ENCODE measurements at regions of chr10 and their contacts with region 1.

Region 1: DNA sequence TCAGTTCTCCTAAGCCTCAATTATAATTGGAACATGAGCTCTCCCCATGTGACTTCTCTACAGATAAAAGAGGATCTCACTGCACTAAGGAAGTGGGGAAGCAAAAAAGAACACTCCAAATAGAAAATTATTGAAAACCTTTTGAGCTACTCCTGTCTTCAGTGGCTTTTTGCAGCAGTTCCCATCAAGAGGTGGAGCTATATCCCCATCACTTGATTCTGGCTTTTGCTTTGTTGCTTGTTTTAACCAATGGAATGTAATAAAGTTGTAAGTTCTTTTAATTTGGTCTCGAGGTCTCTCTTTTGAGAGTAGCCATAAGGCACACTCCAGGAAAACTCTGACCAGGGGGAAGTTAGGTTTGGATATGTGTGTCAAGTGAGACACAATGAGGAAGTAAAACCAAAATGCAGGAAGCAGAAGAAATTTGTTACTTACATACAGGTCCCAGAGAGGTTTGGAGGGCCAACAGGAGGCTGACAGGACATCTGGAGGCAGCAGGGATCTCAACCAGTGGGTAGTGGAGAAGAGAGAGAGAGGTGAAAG is 569.4 kb downstream of the HTR7 start:
- DNase-seq: no peak
- H3K4me3 ChIP-seq: no peak overlapping the region
- H3K27ac ChIP-seq: no peak overlapping the region
- H3K4me1 ChIP-seq: no peaks in the 10 kb centered on the region
- H3K27me3 ChIP-seq: no peaks in the 10 kb centered on the region
- CTCF ChIP-seq: no peak

Region 2: DNA sequence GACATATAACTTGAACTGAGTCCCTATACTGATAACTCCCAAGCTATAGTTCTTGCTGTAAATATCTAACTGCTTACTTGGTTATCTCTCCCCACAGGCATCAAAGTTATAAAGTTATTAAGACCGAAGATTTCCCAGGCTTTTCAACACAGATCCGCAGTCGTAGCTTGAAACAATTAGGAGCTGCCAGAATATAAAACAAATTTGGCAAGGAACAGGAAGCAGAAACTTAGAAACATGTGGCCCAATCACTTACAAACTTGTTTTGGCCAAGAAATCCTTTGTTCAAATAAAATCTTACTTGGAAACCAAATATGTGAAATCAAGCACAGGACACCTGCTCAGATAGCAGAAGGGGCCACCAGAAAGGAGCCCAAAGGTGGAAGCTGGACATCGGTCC is 762.1 kb before region 1 on chr10:
- CTCF ChIA-PET with region 1: no interaction called
- POLR2A ChIA-PET with region 1: interaction called, 10 read pairs
- intact Hi-C with region 1: no loop called
- DNase-seq: no peak
- H3K4me3 ChIP-seq: no peak overlapping the region
- H3K27ac ChIP-seq: no peak overlapping the region
- H3K4me1 ChIP-seq: peaks cover 16% of the 10 kb centered on the region
- H3K27me3 ChIP-seq: no peaks in the 10 kb centered on the region
- CTCF ChIP-seq: no peak